ENCODE measurements at regions of chr19 and their contacts with region 1.

Region 1: GRCh38 chr19:34096020-34096915 is 76.0 kb upstream of the LSM14A start:
- DNase-seq: no peak
- ATAC-seq: no peak
- H3K4me3 ChIP-seq: peak overlapping the region in 1 of 4 donors; percentile 14
- H3K27ac ChIP-seq: no peak overlapping the region
- H3K4me1 ChIP-seq: no peaks in the 10 kb centered on the region
- H3K27me3 ChIP-seq: no peaks in the 10 kb centered on the region
- CTCF ChIP-seq: peak in 4 of 5 experiments; percentile 23 to 58 (median 46)
- POLR2A ChIP-seq: no peak

Region 2: GRCh38 chr19:33785795-33786194 is 310.5 kb before region 1 on chr19:
- in situ Hi-C with region 1: loop called in 2 of 4 experiments (anchors 10 to 25 kb)
- intact Hi-C with region 1: no loop called
- DNase-seq: no peak
- ATAC-seq: no peak
- H3K4me3 ChIP-seq: no peak overlapping the region
- H3K27ac ChIP-seq: no peak overlapping the region
- H3K4me1 ChIP-seq: no peaks in the 10 kb centered on the region
- H3K27me3 ChIP-seq: peaks cover 1 to 6% (median 1%) of the 10 kb centered on the region in 3 donors
- CTCF ChIP-seq: no peak
- POLR2A ChIP-seq: no peak

Region 3: DNA sequence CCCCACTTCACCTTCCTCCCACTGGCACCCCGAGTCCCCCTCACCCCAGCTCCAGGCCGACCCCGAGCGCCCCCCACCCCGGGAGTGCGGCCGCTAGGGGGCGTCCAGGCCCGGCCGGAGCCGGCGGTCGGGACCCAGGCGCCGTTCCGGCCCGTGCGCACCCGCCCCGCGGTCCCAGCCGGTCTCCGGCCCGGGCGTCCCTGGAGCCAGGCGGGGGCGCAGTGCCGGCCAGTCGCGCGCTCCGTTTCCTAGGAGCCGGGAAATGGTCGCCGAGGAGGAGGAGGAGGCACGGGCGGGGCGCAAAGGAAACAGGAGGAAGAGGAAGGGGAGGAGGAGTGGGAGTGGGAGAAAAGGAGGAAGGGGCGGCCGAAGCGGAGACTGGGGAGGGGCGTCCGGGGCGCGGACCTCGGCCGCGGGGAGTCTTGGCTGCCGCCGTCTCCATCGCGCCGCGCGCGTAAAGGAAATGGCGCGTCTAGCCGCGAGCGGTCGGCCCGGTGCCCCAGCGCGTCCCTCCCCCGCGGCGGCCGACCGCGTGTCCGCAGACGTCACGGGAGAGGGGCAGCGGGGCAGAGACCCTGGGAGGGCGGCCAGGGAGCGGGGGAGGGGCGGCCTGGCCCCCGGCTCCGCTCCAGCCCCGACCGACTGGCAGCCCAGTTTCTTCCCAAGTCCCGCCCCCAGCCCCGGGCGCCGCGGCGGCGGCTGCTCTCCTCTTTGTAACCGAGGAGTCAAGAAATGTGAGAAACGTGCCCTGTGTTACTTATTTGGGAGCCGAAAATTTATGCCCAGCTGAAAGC is 300.7 kb before region 1 on chr19:
- in situ Hi-C with region 1: loop called in 1 of 4 experiments (anchors 25 kb)
- intact Hi-C with region 1: loop called (anchors 5 kb)
- DNase-seq: peak in 1 of 2 donors; percentile 11
- ATAC-seq: peak; percentile 54 to 55
- H3K4me3 ChIP-seq: peak overlapping the region; percentile 67 to 81 (median 72)
- H3K27ac ChIP-seq: peak overlapping the region; percentile 80 to 82 (median 80)
- H3K4me1 ChIP-seq: peaks cover 0 to 19% of the 10 kb centered on the region in 2 donors
- H3K27me3 ChIP-seq: peaks cover 6 to 12% (median 7%) of the 10 kb centered on the region in 3 donors
- CTCF ChIP-seq: peak; percentile 53 to 81 (median 77)
- POLR2A ChIP-seq: peak; percentile 39 to 63

Measured in gastrocnemius medialis (tissue), 4 donors.